ENCODE measurements at regions of chr13 and their contacts with region 1.

Region 1: GRCh38 chr13:50236898-50237318 is 221.7 kb downstream of the KCNRG start:
- DNase-seq: peak; percentile 43
- H3K4me3 Mint-ChIP-seq: no peak overlapping the region
- H3K27ac Mint-ChIP-seq: peak overlapping the region; percentile 56
- H3K4me1 Mint-ChIP-seq: peaks cover 38% of the 10 kb centered on the region
- H3K27me3 Mint-ChIP-seq: peaks cover 32% of the 10 kb centered on the region

Region 2: GRCh38 chr13:50140581-50141374 is 96.1 kb before region 1 on chr13:
- intact Hi-C with region 1: loop called (anchors 1 kb)
- DNase-seq: no peak
- H3K4me3 Mint-ChIP-seq: no peak overlapping the region
- H3K27ac Mint-ChIP-seq: no peak overlapping the region
- H3K4me1 Mint-ChIP-seq: peaks cover 8% of the 10 kb centered on the region
- H3K27me3 Mint-ChIP-seq: peaks cover 62% of the 10 kb centered on the region

Region 3: GRCh38 chr13:50224534-50224933 is 12.4 kb before region 1 on chr13:
- intact Hi-C with region 1: loop called (anchors 1 kb)
- DNase-seq: no peak
- H3K4me3 Mint-ChIP-seq: no peak overlapping the region
- H3K27ac Mint-ChIP-seq: no peak overlapping the region
- H3K4me1 Mint-ChIP-seq: peaks cover 49% of the 10 kb centered on the region
- H3K27me3 Mint-ChIP-seq: peaks cover 56% of the 10 kb centered on the region

Region 4: DNA sequence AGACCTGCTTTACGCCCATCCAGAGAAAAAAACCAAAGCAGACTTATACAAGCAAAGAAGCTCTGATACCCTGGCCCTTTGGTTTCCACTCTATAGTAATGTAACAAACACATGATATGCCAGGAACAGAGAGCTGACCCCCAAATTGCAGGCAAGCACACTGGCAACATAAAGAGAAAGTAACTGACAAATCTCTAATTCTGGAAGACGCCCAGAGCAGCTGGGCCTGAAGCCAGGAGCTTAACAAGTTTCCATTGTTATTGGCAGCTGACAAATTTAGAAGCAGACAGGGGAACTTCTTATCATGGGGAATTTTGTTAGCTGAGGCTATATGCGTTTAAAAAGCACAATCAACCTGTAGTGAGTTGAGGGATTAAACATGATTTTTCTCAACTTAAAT is 448.6 kb after region 1 on chr13:
- intact Hi-C with region 1: loop called (anchors 10 kb)
- DNase-seq: no peak
- H3K4me3 Mint-ChIP-seq: no peak overlapping the region
- H3K27ac Mint-ChIP-seq: no peak overlapping the region
- H3K4me1 Mint-ChIP-seq: peaks cover 16% of the 10 kb centered on the region
- H3K27me3 Mint-ChIP-seq: peaks cover 58% of the 10 kb centered on the region